B cell (primary cell): ENCODE measurements at regions of chr1 and their contacts with region 1.

Region 1: DNA sequence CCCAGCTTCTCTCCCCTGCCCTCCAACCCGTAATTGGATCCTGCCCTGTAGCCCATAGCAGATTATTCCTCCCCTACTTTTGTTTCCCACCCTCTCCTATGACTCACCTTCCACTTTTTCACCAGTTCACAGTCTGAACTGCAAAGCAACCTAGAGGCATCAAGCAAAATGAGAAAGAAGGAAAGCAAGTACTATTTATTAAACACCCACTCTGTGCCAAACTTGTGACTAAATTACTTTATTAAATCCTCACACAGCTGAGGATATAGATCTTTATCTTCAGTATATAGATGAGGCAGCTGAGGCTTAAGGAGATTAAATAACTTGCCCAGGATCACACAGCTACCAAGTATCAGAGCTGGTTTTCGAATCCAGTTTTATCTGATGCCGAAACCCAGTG is 20.7 kb upstream of the IKBKE start:
- DNase-seq: no peak
- ATAC-seq: no peak
- H3K4me3 ChIP-seq: no peak overlapping the region
- H3K4me3 Mint-ChIP-seq: no peak overlapping the region
- H3K27ac ChIP-seq: no peak overlapping the region
- H3K27ac Mint-ChIP-seq: no peak overlapping the region
- H3K4me1 ChIP-seq: no peaks in the 10 kb centered on the region
- H3K4me1 Mint-ChIP-seq: no peaks in the 10 kb centered on the region
- H3K27me3 ChIP-seq: no peaks in the 10 kb centered on the region
- H3K27me3 Mint-ChIP-seq: no peaks in the 10 kb centered on the region
- CTCF ChIP-seq: no peak

Region 2: DNA sequence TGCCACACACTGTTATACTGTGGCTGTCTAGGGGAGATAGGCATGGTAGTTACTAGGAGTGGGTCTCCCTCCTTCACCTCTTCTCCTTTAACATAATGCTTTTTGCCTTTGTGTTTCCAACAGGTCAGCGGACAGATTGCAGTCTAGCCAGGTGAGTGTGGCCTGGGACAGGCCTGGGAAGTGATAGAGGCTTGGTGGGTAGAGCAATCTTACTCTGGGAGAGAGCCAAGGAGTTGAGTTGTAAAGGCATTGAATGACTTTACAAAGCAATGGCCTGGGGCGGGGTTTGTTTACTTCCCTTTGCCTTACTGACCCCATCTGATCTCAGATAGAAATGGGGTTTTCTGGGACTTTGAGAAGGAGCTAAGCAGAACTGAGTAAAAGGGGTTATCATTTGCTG is 30.4 kb before region 1 on chr1:
- CTCF ChIA-PET with region 1: no interaction called
- POLR2A ChIA-PET with region 1: no interaction called
- intact Hi-C with region 1: no loop called
- DNase-seq: no peak
- ATAC-seq: no peak
- H3K4me3 ChIP-seq: no peak overlapping the region
- H3K4me3 Mint-ChIP-seq: no peak overlapping the region
- H3K27ac ChIP-seq: no peak overlapping the region
- H3K27ac Mint-ChIP-seq: no peak overlapping the region
- H3K4me1 ChIP-seq: no peaks in the 10 kb centered on the region
- H3K4me1 Mint-ChIP-seq: peaks cover 1% of the 10 kb centered on the region
- H3K27me3 ChIP-seq: no peaks in the 10 kb centered on the region
- H3K27me3 Mint-ChIP-seq: no peaks in the 10 kb centered on the region
- CTCF ChIP-seq: no peak

Region 3: DNA sequence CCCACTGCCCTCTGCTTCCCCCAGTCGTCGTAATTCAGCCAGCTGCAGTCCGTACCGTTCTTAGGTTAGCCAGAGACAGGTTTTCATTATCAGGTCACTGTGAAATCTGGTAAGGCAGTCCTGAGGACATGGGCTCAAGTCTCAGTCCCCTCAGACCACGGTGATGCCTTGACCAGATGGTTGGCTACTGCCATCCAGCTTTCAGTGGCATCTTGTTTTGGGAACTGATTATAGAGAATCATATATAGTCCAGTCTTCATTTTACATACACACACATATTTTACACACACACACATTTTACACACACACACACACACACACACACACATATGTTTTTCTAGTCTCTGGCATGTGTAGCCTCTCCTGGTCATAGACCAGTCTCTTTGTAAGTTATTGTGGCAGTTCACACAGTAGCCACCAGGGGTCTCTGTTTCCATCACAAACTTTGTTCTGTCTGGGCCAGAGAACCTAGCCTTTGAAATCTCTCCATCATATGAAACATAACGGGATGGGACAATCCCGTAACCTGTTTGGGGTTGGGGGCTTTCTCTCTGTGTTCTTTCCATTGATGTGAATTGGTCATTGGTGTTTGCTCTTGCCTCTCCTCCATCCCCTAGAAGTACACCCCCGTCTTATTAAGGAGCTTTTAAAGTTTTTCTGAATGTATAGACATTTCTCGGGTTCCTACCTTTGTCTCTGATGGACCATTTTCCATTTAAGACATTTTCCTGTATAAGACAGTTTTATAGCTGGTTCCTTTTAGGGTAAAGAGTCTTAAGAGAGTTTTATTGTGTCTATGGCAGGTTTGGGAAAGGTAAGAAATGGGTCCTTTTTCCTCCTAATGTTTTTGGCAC is 12.2 kb after region 1 on chr1:
- CTCF ChIA-PET with region 1: interaction called, 21 read pairs
- POLR2A ChIA-PET with region 1: no interaction called
- intact Hi-C with region 1: no loop called
- DNase-seq: peak; percentile 78
- ATAC-seq: peak; percentile 94
- H3K4me3 ChIP-seq: no peak overlapping the region
- H3K4me3 Mint-ChIP-seq: no peak overlapping the region
- H3K27ac ChIP-seq: no peak overlapping the region
- H3K27ac Mint-ChIP-seq: no peak overlapping the region
- H3K4me1 ChIP-seq: peaks cover 12% of the 10 kb centered on the region in 2 donors
- H3K4me1 Mint-ChIP-seq: peaks cover 10% of the 10 kb centered on the region
- H3K27me3 ChIP-seq: no peaks in the 10 kb centered on the region
- H3K27me3 Mint-ChIP-seq: no peaks in the 10 kb centered on the region
- CTCF ChIP-seq: peak; percentile 84

Region 4: DNA sequence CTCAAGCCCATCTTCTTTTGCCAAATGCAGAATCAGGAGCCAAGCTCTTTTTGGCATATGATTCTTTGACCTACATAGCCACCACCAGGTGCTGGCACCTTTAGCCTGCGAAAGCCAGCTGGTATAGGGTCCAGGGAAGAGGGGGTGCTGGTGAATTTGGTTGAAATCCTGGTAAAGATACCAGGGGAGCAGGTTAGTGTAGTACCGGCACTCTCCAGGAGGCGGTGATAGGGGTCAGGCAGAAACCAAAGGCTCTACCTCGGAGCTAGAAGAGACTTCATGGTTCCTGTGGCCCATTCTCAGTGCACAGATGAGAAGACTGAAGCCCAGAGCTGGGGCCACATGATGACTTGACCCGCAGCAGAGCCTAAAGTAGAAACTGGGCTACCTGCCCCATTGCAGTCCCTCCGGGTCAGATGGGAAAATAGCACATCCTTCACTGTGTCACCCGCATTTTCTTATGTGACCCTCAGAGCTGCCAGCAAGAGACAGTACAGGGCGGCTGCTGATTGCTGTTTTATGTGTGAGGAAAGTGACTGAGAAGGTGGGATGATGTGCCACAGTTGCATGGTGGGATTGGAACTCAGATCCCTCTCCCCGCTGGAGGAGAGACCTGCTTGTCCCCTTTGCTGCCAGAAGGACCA is 285.0 kb after region 1 on chr1:
- CTCF ChIA-PET with region 1: no interaction called
- POLR2A ChIA-PET with region 1: no interaction called
- intact Hi-C with region 1: no loop called
- DNase-seq: peak; percentile 80
- ATAC-seq: peak; percentile 80
- H3K4me3 ChIP-seq: no peak overlapping the region
- H3K4me3 Mint-ChIP-seq: no peak overlapping the region
- H3K27ac ChIP-seq: no peak overlapping the region
- H3K27ac Mint-ChIP-seq: peak overlapping the region; percentile 69
- H3K4me1 ChIP-seq: peaks cover 20 to 37% of the 10 kb centered on the region in 2 donors
- H3K4me1 Mint-ChIP-seq: peaks cover 45% of the 10 kb centered on the region
- H3K27me3 ChIP-seq: no peaks in the 10 kb centered on the region
- H3K27me3 Mint-ChIP-seq: no peaks in the 10 kb centered on the region
- CTCF ChIP-seq: peak; percentile 86